ENCODE measurements at regions of chr3 and their contacts with region 1.

Region 1: GRCh38 chr3:58200846-58201355 is 9.9 kb downstream of the DNASE1L3 start:
- DNase-seq: no peak
- ATAC-seq: peak; percentile 53
- H3K4me3 ChIP-seq: no peak overlapping the region; the same call in 1 of the 2 replicates
- H3K27ac ChIP-seq: peak overlapping the region; percentile 73
- H3K4me1 ChIP-seq: peaks cover 46% of the 10 kb centered on the region
- H3K27me3 ChIP-seq: no peaks in the 10 kb centered on the region
- CTCF ChIP-seq: no peak
- EP300 ChIP-seq: no peak
- POLR2A ChIP-seq: 0 out of 2 replicates have a peak, but pooled peaks have one; percentile 25
- RAD21 ChIP-seq: no peak

Region 2: GRCh38 chr3:58231666-58232065 is 30.8 kb after region 1 on chr3:
- CTCF ChIA-PET with region 1: interaction called, 11 read pairs
- POLR2A ChIA-PET with region 1: interaction called, 72 read pairs
- RAD21 ChIA-PET with region 1: interaction called, 33 read pairs
- SMC1A ChIA-PET with region 1: interaction called, 67 read pairs
- in situ Hi-C with region 1: no loop called
- intact Hi-C with region 1: no loop called
- DNase-seq: no peak
- ATAC-seq: no peak
- H3K4me3 ChIP-seq: no peak overlapping the region
- H3K27ac ChIP-seq: no peak overlapping the region
- H3K4me1 ChIP-seq: peaks cover 6% of the 10 kb centered on the region
- H3K27me3 ChIP-seq: no peaks in the 10 kb centered on the region
- CTCF ChIP-seq: no peak
- EP300 ChIP-seq: no peak
- POLR2A ChIP-seq: no peak
- RAD21 ChIP-seq: no peak